Activated naive CD4-positive, alpha-beta T cell treated with anti-CD3 and anti-CD28 coated beads for 36 hours (primary cell): ENCODE measurements at regions of chr9 and their contacts with region 1.

Region 1: GRCh38 chr9:87464110-87464965 is 33.3 kb upstream of the DAPK1 start:
- DNase-seq: peak; percentile 40
- H3K4me3 Mint-ChIP-seq: no peak overlapping the region
- H3K27ac Mint-ChIP-seq: peak overlapping the region; percentile 75
- H3K4me1 Mint-ChIP-seq: peaks cover 12% of the 10 kb centered on the region
- H3K27me3 Mint-ChIP-seq: no peaks in the 10 kb centered on the region

Region 2: GRCh38 chr9:87212560-87213159 is 251.7 kb before region 1 on chr9:
- CTCF ChIA-PET with region 1: no interaction called
- intact Hi-C with region 1: no loop called
- DNase-seq: no peak
- H3K4me3 Mint-ChIP-seq: no peak overlapping the region
- H3K27ac Mint-ChIP-seq: no peak overlapping the region
- H3K4me1 Mint-ChIP-seq: no peaks in the 10 kb centered on the region
- H3K27me3 Mint-ChIP-seq: peaks cover 6% of the 10 kb centered on the region

Region 3: DNA sequence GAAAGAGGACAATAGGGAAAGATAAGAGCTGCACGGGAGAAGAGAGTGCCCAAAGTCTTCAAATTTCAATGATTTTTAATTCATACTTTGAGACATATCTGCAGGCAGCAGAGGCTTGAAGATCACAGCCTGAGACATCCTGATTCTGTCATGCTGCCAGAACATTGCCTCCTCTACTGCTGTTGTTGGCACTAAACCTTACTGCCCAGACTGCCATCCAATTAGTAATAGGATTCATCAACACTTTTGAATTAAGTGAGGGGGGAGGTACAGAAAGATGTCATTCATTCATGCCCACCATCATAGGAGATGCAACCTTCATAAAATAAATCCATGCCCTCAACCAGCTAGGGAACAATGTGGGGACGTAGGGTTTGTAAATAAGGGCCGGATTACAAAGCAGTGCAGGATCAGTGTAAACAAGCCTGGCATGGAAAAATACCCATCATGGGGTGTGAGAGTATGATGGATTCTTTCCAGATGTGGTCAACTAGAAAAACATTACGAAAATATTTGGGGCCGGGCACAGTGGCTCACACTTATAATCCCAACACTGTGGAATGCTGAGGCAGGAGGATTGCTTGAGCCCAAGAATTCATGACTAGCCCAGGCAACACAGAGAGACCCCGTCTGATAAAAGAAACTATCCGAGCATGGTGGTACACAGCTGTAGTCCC is 88.8 kb before region 1 on chr9:
- CTCF ChIA-PET with region 1: no interaction called
- intact Hi-C with region 1: loop called (anchors 1 kb)
- DNase-seq: no peak
- H3K4me3 Mint-ChIP-seq: no peak overlapping the region
- H3K27ac Mint-ChIP-seq: no peak overlapping the region
- H3K4me1 Mint-ChIP-seq: peaks cover 8% of the 10 kb centered on the region
- H3K27me3 Mint-ChIP-seq: peaks cover 17% of the 10 kb centered on the region

Region 4: GRCh38 chr9:87518702-87519335 is 54.5 kb after region 1 on chr9:
- CTCF ChIA-PET with region 1: no interaction called
- intact Hi-C with region 1: no loop called
- DNase-seq: no peak
- H3K4me3 Mint-ChIP-seq: no peak overlapping the region
- H3K27ac Mint-ChIP-seq: no peak overlapping the region
- H3K4me1 Mint-ChIP-seq: peaks cover 3% of the 10 kb centered on the region
- H3K27me3 Mint-ChIP-seq: peaks cover 14% of the 10 kb centered on the region

Region 5: GRCh38 chr9:87535817-87536539 is 71.6 kb after region 1 on chr9:
- CTCF ChIA-PET with region 1: no interaction called
- intact Hi-C with region 1: loop called (anchors 1 kb)
- DNase-seq: peak; percentile 53
- H3K4me3 Mint-ChIP-seq: no peak overlapping the region
- H3K27ac Mint-ChIP-seq: peak overlapping the region; percentile 71
- H3K4me1 Mint-ChIP-seq: peaks cover 10% of the 10 kb centered on the region
- H3K27me3 Mint-ChIP-seq: no peaks in the 10 kb centered on the region

Region 6: DNA sequence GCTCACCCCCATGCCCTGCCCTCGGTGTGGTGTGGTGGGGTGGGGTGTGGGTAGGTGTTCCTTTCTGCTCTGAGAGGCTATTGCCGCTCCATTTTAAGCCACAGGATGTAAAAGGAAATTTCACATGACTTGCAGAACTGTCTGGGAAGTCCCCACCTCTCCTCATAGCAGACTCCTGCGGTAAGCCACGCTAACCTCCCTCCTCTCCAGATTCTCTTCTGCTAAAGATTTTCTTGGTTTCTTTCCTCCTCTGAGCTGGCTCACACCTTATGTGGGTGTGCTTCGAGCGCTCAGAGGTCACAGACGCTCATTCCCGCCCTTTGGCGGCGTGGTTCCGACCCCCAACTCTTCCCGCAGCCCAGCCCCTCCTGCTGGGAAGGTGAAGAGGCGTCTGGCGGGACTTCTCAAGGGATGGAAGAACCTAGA is 542.9 kb after region 1 on chr9:
- CTCF ChIA-PET with region 1: no interaction called
- intact Hi-C with region 1: loop called (anchors 1 kb)
- DNase-seq: peak; percentile 88
- H3K4me3 Mint-ChIP-seq: no peak overlapping the region
- H3K27ac Mint-ChIP-seq: peak overlapping the region; percentile 51
- H3K4me1 Mint-ChIP-seq: peaks cover 12% of the 10 kb centered on the region
- H3K27me3 Mint-ChIP-seq: peaks cover 4% of the 10 kb centered on the region